ENCODE measurements at regions of chr9 and their contacts with region 1.

Region 1: DNA sequence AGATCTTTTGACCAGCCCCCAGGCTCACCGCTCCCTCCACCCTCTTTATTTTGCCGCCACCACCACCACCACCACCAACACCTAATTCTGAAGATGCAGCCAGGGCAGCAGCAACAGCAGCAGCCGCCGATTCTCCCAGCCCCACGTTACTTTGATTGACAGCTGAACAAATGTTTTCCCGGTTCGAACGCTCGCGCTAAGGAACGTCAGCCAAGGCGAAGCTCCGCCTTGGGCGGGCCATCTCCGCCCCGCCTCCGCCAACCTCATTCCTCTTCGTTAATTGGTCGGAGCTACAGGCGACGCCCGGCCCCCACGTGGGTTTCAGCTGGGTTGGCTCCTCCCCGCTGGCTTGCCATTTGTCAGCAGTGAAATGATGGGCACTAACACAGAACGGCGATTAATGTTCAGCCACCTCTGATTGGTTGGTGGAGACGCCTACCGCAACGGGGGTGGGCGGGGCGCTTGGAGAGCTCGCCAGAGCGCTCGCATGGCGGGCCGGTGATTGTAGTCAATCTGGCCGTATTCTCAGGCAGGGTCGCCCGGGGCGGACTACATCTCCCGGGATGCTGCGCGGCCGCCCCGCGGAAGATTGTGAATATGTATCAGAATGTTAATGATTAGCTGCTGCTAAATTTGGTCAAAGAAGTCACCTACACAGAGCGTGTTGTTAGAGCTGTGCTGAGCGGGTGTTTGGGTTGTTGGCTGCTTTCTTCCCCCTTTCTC is at the start of gene TLE4:
- DNase-seq: peak; percentile 98 to 100 (median 99)
- ATAC-seq: peak; percentile 83
- H3K4me3 ChIP-seq: peak within 1 kb of the TSS; percentile 71 to 72
- H3K4me3 Mint-ChIP-seq: peak within 1 kb of the TSS; percentile 89
- H3K27ac ChIP-seq: peak within 1 kb of the TSS; percentile 86 to 92
- H3K27ac Mint-ChIP-seq: peak within 1 kb of the TSS; percentile 50
- H3K4me1 ChIP-seq: peaks cover 29% of the 10 kb centered on the region
- H3K4me1 Mint-ChIP-seq: peaks cover 31% of the 10 kb centered on the region
- H3K27me3 ChIP-seq: peaks cover 0 to 4% of the 10 kb centered on the region in 2 experiments
- H3K27me3 Mint-ChIP-seq: no peaks in the 10 kb centered on the region
- CTCF ChIP-seq: no peak
- total RNA-seq, gene TLE4: 123 to 124 TPM

Region 2: GRCh38 chr9:79477955-79478771 is 93.3 kb before region 1 on chr9:
- CTCF ChIA-PET with region 1: interaction called, 4 read pairs
- POLR2A ChIA-PET with region 1: interaction called, 3 read pairs
- intact Hi-C with region 1: loop called (anchors 1 to 2 kb)
- DNase-seq: peak in 8 of 9 experiments; percentile 7 to 66 (median 46)
- ATAC-seq: peak; percentile 62
- H3K4me3 ChIP-seq: no peak overlapping the region
- H3K4me3 Mint-ChIP-seq: no peak overlapping the region
- H3K27ac ChIP-seq: no peak overlapping the region
- H3K27ac Mint-ChIP-seq: no peak overlapping the region
- H3K4me1 ChIP-seq: no peaks in the 10 kb centered on the region
- H3K4me1 Mint-ChIP-seq: peaks cover 7% of the 10 kb centered on the region
- H3K27me3 ChIP-seq: no peaks in the 10 kb centered on the region
- H3K27me3 Mint-ChIP-seq: no peaks in the 10 kb centered on the region
- CTCF ChIP-seq: peak; percentile 43

Region 3: GRCh38 chr9:79583952-79584654 is 12.6 kb after region 1 on chr9:
- CTCF ChIA-PET with region 1: interaction called, 11 read pairs
- POLR2A ChIA-PET with region 1: interaction called, 40 read pairs
- intact Hi-C with region 1: loop called in 1 of 2 experiments (anchors 1 kb)
- DNase-seq: peak in 4 of 9 experiments; percentile 20 to 57 (median 30)
- ATAC-seq: peak; percentile 36
- H3K4me3 ChIP-seq: no peak overlapping the region
- H3K4me3 Mint-ChIP-seq: peak overlapping the region; percentile 54
- H3K27ac ChIP-seq: no peak overlapping the region
- H3K27ac Mint-ChIP-seq: peak overlapping the region; percentile 46
- H3K4me1 ChIP-seq: peaks cover 55% of the 10 kb centered on the region
- H3K4me1 Mint-ChIP-seq: peaks cover 82% of the 10 kb centered on the region
- H3K27me3 ChIP-seq: no peaks in the 10 kb centered on the region
- H3K27me3 Mint-ChIP-seq: no peaks in the 10 kb centered on the region
- CTCF ChIP-seq: no peak

Region 4: GRCh38 chr9:79623799-79624721 is 52.6 kb after region 1 on chr9:
- CTCF ChIA-PET with region 1: no interaction called
- POLR2A ChIA-PET with region 1: interaction called, 15 read pairs
- intact Hi-C with region 1: loop called in 1 of 2 experiments (anchors 5 kb)
- DNase-seq: peak in 8 of 9 experiments; percentile 5 to 87 (median 37)
- ATAC-seq: peak; percentile 92
- H3K4me3 ChIP-seq: peak overlapping the region; percentile 0 to 17
- H3K4me3 Mint-ChIP-seq: peak overlapping the region; percentile 70
- H3K27ac ChIP-seq: peak overlapping the region; percentile 1 to 66
- H3K27ac Mint-ChIP-seq: peak overlapping the region; percentile 87
- H3K4me1 ChIP-seq: peaks cover 22% of the 10 kb centered on the region
- H3K4me1 Mint-ChIP-seq: peaks cover 71% of the 10 kb centered on the region
- H3K27me3 ChIP-seq: no peaks in the 10 kb centered on the region
- H3K27me3 Mint-ChIP-seq: no peaks in the 10 kb centered on the region
- CTCF ChIP-seq: no peak

Region 5: DNA sequence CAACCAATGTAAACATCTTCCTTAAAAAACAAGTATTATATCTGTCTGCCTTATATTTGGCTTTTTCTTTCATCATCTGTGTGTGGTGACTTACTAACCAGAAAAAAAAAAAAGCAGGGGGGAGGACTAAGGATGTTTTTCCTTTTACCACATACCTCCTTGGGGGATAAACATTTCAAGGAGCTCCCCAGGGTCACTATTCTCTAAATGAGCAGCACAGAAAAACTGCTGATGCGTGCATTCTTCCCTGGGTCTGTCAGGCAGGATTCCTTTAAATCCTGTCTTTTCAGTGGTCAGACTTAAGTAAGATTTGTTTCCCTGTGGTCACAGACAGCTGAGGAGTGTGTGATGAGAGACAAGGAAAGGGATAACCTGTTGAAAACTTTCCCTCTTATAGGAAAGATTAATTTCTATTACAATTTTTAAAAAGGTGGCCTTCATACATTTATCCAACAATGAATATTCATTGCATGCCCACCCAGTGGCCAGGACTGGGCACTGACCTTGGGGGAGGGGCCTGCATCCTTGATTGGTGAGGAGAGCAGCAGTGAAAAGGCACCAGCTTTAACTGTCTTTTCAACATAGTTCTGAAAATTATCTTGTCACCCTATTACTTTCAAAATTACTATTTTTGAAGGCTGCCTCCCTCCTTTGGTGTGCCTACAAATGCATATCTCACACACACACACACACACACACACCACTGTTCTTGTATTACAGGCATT is 123.4 kb after region 1 on chr9:
- CTCF ChIA-PET with region 1: interaction called, 4 read pairs
- POLR2A ChIA-PET with region 1: interaction called, 6 read pairs
- intact Hi-C with region 1: loop called in 1 of 2 experiments (anchors 5 kb)
- DNase-seq: no peak
- ATAC-seq: no peak
- H3K4me3 ChIP-seq: no peak overlapping the region
- H3K4me3 Mint-ChIP-seq: no peak overlapping the region
- H3K27ac ChIP-seq: no peak overlapping the region
- H3K27ac Mint-ChIP-seq: no peak overlapping the region
- H3K4me1 ChIP-seq: peaks cover 27% of the 10 kb centered on the region
- H3K4me1 Mint-ChIP-seq: peaks cover 80% of the 10 kb centered on the region
- H3K27me3 ChIP-seq: no peaks in the 10 kb centered on the region
- H3K27me3 Mint-ChIP-seq: no peaks in the 10 kb centered on the region
- CTCF ChIP-seq: no peak